ENCODE measurements at regions of chr5 and their contacts with region 1.

Region 1: DNA sequence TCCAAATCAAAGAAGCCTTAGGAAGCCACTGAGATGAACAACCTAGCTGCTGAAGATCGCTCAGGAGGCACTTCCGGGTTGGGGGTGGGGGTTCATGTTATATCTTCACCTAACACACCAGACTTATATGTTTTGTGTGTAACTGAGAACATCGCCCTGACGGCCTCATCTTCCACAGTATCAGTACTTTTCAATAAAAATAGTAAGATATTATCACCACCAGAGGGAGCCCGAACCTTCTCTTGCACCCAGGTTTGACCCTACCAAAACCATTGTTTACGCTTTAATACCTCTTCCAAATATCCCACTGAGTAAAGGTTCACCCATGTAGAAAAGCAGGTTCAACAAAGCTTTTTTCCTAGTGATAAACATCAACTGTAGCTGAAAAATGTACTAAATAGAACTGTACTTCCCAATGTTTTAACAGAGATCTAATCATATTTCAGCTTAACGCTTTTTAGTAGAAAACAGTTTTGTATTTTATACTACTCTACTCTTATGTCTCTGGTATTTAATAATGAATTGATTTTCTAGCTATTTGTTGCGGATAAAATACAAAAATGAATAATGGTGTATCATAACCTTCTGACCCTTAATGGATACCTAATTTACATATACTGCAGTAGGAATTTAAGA is 244.0 kb downstream of the EPB41L4A start:
- H3K4me3 Mint-ChIP-seq: no peak overlapping the region
- H3K27ac Mint-ChIP-seq: no peak overlapping the region
- H3K4me1 Mint-ChIP-seq: no peaks in the 10 kb centered on the region
- H3K27me3 Mint-ChIP-seq: peaks cover 8% of the 10 kb centered on the region

Region 2: DNA sequence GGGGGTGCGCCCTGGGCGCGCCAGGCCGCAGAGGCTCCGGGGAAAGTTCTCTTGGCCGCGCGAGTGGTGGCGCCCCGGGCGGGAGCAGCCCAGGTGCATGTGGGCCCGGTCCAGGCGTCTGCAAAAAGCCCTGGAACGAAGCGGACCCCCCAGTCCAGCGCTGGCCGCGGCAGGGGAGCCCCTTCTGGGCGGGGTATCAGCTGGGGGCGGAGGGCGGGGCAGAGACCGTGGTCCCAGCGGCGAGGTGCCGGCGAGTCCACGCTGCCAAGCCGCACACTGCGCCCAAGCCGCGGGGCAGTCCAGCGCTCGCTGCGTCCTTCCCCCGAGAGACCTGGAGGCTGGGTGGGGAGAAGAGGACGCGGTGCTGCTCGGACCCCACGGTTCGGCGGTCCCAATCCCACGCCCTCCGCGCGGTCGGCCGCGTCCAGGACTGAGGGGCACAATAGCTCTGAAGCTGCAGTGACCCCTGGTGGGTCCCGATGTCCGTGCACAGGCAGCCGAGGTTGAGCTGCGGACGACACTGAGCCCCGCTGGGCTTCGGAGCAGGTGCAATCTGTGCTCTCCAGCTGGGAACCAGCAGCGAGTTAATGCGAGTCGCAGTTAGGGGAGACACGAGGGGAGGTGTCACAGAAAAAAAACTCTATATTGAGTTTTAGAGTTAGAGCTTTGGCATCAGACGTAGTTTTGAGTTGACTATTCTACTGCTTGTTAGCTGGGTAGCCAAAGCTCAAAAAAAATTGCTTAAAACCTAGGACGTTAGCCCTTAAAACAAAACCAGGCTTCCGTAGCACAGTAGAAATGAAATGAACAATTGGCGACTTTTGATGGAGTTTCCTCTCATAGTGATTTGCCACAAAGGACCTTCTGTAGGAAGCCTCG is 245.1 kb after region 1 on chr5:
- intact Hi-C with region 1: loop called (anchors 5 kb)
- H3K4me3 Mint-ChIP-seq: peak overlapping the region; percentile 77
- H3K27ac Mint-ChIP-seq: no peak overlapping the region
- H3K4me1 Mint-ChIP-seq: peaks cover 23% of the 10 kb centered on the region
- H3K27me3 Mint-ChIP-seq: peaks cover 60% of the 10 kb centered on the region

Region 3: DNA sequence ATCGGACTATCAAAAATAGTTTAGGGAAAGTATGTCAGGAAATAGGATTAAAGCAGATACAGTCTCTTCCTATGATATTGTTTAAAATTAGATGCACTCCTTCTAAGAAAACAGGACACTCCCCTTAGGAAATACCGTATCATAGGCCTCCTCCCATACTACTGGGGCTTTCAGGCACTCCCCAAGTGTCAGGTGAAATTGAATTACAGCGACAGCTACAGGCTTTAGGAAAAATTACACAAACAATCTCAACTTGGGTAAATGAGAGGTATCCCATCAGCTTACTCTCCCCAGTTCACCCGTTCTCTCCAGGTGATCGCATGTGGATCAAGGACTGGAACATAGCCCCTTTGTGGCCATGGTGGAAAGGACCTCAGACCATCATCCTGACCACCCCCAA is 354.4 kb after region 1 on chr5:
- intact Hi-C with region 1: loop called (anchors 5 kb)
- H3K4me3 Mint-ChIP-seq: no peak overlapping the region
- H3K27ac Mint-ChIP-seq: no peak overlapping the region
- H3K4me1 Mint-ChIP-seq: peaks cover 55% of the 10 kb centered on the region
- H3K27me3 Mint-ChIP-seq: no peaks in the 10 kb centered on the region

Region 4: DNA sequence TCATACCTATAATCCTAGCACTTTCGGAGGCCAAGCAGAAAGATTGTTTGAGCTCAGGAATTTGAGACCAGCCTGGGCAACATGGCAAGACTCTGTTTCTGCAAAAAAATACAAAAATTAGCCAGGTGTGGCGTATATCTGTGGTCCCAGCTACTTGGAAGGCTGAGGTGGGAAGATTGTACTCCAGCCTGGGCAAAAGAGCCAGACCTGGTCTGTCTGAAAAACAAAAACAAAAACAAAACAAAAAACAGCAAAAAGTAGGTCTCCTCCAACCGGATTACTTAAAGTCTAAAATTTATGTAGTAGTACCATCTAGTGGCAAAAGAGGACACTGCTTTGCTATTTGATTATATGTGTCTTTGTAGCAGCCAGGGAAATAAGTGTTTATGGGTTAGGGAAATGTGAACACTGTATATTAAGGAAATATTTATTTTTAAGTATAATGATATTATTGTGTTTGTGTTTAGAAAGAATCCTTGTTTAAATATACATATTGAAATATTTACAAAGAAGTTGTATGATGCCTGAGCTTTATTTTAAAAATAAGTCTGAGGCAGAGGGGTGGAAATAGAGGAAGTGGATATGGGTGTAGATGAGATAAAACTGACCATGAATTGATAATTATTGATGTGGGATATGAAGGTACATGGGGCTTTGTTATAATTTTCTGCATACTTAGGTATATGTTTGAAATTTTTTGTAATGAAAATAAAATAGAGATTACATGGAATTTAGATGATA is 582.6 kb after region 1 on chr5:
- intact Hi-C with region 1: loop called (anchors 2 kb)
- H3K4me3 Mint-ChIP-seq: no peak overlapping the region
- H3K27ac Mint-ChIP-seq: peak overlapping the region; percentile 34
- H3K4me1 Mint-ChIP-seq: peaks cover 5% of the 10 kb centered on the region
- H3K27me3 Mint-ChIP-seq: no peaks in the 10 kb centered on the region

Region 5: GRCh38 chr5:113606298-113607134 is 1431.4 kb after region 1 on chr5:
- intact Hi-C with region 1: loop called (anchors 10 kb)
- H3K4me3 Mint-ChIP-seq: no peak overlapping the region
- H3K27ac Mint-ChIP-seq: no peak overlapping the region
- H3K4me1 Mint-ChIP-seq: peaks cover 8% of the 10 kb centered on the region
- H3K27me3 Mint-ChIP-seq: peaks cover 24% of the 10 kb centered on the region

Measured in dendritic cell treated with granulocyte-macrophage colony-stimulating factor and Interleukin-4, amounts not matched to agents 40 ng/mL and 50 ng/mL, for 4 days (primary cell).